CD8-positive, alpha-beta T cell (primary cell): ENCODE measurements at regions of chr20 and their contacts with region 1.

Region 1: GRCh38 chr20:31723319-31724078 is 831 bp upstream of the BCL2L1 start:
- DNase-seq: peak; percentile 96 to 99 (median 98)
- ATAC-seq: peak; percentile 93
- H3K4me3 ChIP-seq: peak overlapping the region; percentile 64 to 85
- H3K4me3 Mint-ChIP-seq: peak overlapping the region; percentile 86
- H3K27ac ChIP-seq: peak overlapping the region; percentile 91 to 94
- H3K27ac Mint-ChIP-seq: peak overlapping the region; percentile 94
- H3K4me1 ChIP-seq: peaks cover 38% of the 10 kb centered on the region
- H3K4me1 Mint-ChIP-seq: peaks cover 43% of the 10 kb centered on the region
- H3K27me3 ChIP-seq: no peaks in the 10 kb centered on the region
- H3K27me3 Mint-ChIP-seq: no peaks in the 10 kb centered on the region
- CTCF ChIP-seq: no peak

Region 2: GRCh38 chr20:31560094-31560899 is 163.2 kb before region 1 on chr20:
- CTCF ChIA-PET with region 1: interaction called, 11 read pairs
- POLR2A ChIA-PET with region 1: no interaction called
- intact Hi-C with region 1: no loop called
- DNase-seq: peak; percentile 54 to 82 (median 78)
- ATAC-seq: peak; percentile 73
- H3K4me3 ChIP-seq: no peak overlapping the region
- H3K4me3 Mint-ChIP-seq: no peak overlapping the region
- H3K27ac ChIP-seq: no peak overlapping the region
- H3K27ac Mint-ChIP-seq: peak overlapping the region; percentile 4
- H3K4me1 ChIP-seq: peaks cover 8% of the 10 kb centered on the region
- H3K4me1 Mint-ChIP-seq: peaks cover 7% of the 10 kb centered on the region
- H3K27me3 ChIP-seq: no peaks in the 10 kb centered on the region
- H3K27me3 Mint-ChIP-seq: no peaks in the 10 kb centered on the region
- CTCF ChIP-seq: peak; percentile 79

Region 3: DNA sequence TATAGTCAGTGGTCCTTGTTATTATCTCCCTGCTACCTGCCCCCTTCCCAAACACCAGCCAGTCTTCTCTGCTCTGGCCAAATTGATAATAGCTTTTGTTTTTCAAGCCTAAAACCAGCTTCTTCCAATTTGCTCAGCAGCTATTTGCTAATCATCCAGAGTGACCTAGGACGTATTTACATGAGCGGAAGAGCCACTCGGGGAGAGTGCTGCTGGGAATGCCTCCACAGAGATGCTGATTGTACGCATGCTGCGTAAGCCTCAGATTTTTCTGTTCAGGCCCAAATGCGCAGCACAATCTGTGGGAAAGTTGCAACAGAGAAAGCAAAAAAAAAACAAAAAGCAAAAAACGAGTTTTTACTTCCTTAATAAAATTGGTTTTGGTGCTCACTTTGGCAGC is 142.8 kb before region 1 on chr20:
- CTCF ChIA-PET with region 1: no interaction called
- POLR2A ChIA-PET with region 1: no interaction called
- intact Hi-C with region 1: no loop called
- DNase-seq: no peak
- ATAC-seq: no peak
- H3K4me3 ChIP-seq: no peak overlapping the region
- H3K4me3 Mint-ChIP-seq: no peak overlapping the region
- H3K27ac ChIP-seq: no peak overlapping the region
- H3K27ac Mint-ChIP-seq: no peak overlapping the region
- H3K4me1 ChIP-seq: peaks cover 4% of the 10 kb centered on the region
- H3K4me1 Mint-ChIP-seq: peaks cover 12% of the 10 kb centered on the region
- H3K27me3 ChIP-seq: no peaks in the 10 kb centered on the region
- H3K27me3 Mint-ChIP-seq: peaks cover 6% of the 10 kb centered on the region
- CTCF ChIP-seq: no peak

Region 4: GRCh38 chr20:31630187-31630790 is 93.2 kb before region 1 on chr20:
- CTCF ChIA-PET with region 1: interaction called, 25 read pairs
- POLR2A ChIA-PET with region 1: interaction called, 4 read pairs
- intact Hi-C with region 1: loop called (anchors 1 kb)
- DNase-seq: no peak
- ATAC-seq: no peak
- H3K4me3 ChIP-seq: no peak overlapping the region
- H3K4me3 Mint-ChIP-seq: no peak overlapping the region
- H3K27ac ChIP-seq: no peak overlapping the region
- H3K27ac Mint-ChIP-seq: no peak overlapping the region
- H3K4me1 ChIP-seq: no peaks in the 10 kb centered on the region
- H3K4me1 Mint-ChIP-seq: no peaks in the 10 kb centered on the region
- H3K27me3 ChIP-seq: no peaks in the 10 kb centered on the region
- H3K27me3 Mint-ChIP-seq: no peaks in the 10 kb centered on the region
- CTCF ChIP-seq: no peak

Region 5: GRCh38 chr20:31674895-31675827 is 48.3 kb before region 1 on chr20:
- CTCF ChIA-PET with region 1: interaction called, 27 read pairs
- POLR2A ChIA-PET with region 1: interaction called, 31 read pairs
- intact Hi-C with region 1: loop called (anchors 1 to 2 kb)
- DNase-seq: peak; percentile 6 to 91 (median 65)
- ATAC-seq: peak; percentile 82
- H3K4me3 ChIP-seq: peak overlapping the region; percentile 56 to 66
- H3K4me3 Mint-ChIP-seq: peak overlapping the region; percentile 92
- H3K27ac ChIP-seq: peak overlapping the region; percentile 64 to 99
- H3K27ac Mint-ChIP-seq: peak overlapping the region; percentile 97
- H3K4me1 ChIP-seq: peaks cover 52% of the 10 kb centered on the region
- H3K4me1 Mint-ChIP-seq: peaks cover 62% of the 10 kb centered on the region
- H3K27me3 ChIP-seq: no peaks in the 10 kb centered on the region
- H3K27me3 Mint-ChIP-seq: no peaks in the 10 kb centered on the region
- CTCF ChIP-seq: no peak

Region 6: GRCh38 chr20:31707994-31708735 is 15.3 kb before region 1 on chr20:
- CTCF ChIA-PET with region 1: interaction called, 11 read pairs
- POLR2A ChIA-PET with region 1: interaction called, 5 read pairs
- intact Hi-C with region 1: no loop called
- DNase-seq: no peak
- ATAC-seq: no peak
- H3K4me3 ChIP-seq: no peak overlapping the region
- H3K4me3 Mint-ChIP-seq: no peak overlapping the region
- H3K27ac ChIP-seq: peak overlapping the region in 1 of 2 experiments; percentile 32
- H3K27ac Mint-ChIP-seq: peak overlapping the region; percentile 60
- H3K4me1 ChIP-seq: peaks cover 20% of the 10 kb centered on the region
- H3K4me1 Mint-ChIP-seq: peaks cover 68% of the 10 kb centered on the region
- H3K27me3 ChIP-seq: no peaks in the 10 kb centered on the region
- H3K27me3 Mint-ChIP-seq: no peaks in the 10 kb centered on the region
- CTCF ChIP-seq: no peak

Region 7: DNA sequence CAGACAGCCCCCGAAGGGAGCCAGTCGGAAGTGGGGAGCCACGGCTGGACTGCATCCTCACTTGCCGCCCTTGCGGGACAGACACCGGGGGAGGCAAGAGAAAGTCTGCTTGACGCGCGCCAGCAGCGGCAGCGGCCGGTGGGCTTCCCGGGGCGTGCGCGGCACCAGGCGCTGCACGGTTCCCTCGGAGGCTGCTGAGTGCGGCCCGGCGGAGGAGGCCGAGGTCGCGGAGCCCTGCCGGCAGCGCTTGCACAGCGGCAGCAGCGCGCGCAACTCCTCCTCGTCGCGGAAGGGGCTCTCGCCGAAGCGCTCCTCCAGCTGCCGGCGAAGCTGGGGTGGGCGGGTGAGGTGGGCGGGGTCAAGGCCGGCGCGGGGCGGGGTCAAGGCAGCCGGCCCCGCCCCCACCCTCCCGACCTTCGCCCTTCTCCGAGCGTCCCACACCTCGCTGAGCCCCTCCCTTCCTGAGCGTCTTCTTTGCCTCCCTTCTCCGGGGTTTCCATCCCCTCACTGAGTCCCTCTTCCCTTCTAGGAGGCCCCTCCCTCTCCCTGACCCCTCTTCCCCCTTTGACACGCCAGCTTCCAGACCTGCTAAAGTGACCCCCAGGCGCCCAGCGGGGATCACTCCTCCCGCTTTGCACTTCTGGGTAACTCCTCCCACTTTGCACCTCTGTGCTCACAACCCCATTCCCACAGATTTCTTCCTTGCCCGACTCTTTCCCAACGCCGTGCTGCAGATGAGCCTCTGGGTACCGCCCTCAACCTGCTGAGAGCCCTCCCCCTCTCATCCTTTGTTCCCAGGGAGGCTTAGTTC is 138.1 kb after region 1 on chr20:
- CTCF ChIA-PET with region 1: no interaction called
- POLR2A ChIA-PET with region 1: no interaction called
- intact Hi-C with region 1: no loop called
- DNase-seq: peak; percentile 47 to 85 (median 70)
- ATAC-seq: peak; percentile 93
- H3K4me3 ChIP-seq: peak overlapping the region; percentile 37 to 43
- H3K4me3 Mint-ChIP-seq: peak overlapping the region; percentile 78
- H3K27ac ChIP-seq: no peak overlapping the region
- H3K27ac Mint-ChIP-seq: no peak overlapping the region
- H3K4me1 ChIP-seq: peaks cover 9% of the 10 kb centered on the region
- H3K4me1 Mint-ChIP-seq: peaks cover 11% of the 10 kb centered on the region
- H3K27me3 ChIP-seq: peaks cover 16% of the 10 kb centered on the region in 2 experiments
- H3K27me3 Mint-ChIP-seq: peaks cover 28% of the 10 kb centered on the region
- CTCF ChIP-seq: no peak